ENCODE measurements at regions of chr15 and their contacts with region 1.

Region 1: DNA sequence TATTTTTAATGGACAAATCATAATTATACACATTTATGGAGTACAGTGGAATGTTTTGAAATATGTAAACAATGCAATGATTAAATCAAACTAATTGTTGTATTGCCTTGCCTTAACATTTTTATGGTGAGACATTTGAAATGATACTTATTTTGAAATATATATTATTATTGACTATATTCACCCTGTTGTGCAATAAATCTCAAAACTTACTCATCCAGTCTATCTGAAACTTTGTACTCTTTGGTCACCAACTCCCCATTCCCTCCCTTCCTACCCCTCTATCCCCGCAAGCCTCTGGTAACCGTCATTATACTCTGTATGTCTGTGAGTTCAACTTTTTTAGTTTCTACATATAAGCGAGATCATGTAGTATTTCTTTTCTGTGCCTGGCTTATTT is 74.7 kb upstream of the GOLGA6B start:
- DNase-seq: no peak
- H3K4me3 ChIP-seq: no peak overlapping the region
- H3K27ac ChIP-seq: no peak overlapping the region
- H3K4me1 ChIP-seq: no peaks in the 10 kb centered on the region
- H3K27me3 ChIP-seq: no peaks in the 10 kb centered on the region
- CTCF ChIP-seq: no peak

Region 2: GRCh38 chr15:71701808-71702207 is 878.0 kb before region 1 on chr15:
- intact Hi-C with region 1: loop called (anchors 5 kb)
- DNase-seq: no peak
- H3K4me3 ChIP-seq: no peak overlapping the region
- H3K27ac ChIP-seq: no peak overlapping the region
- H3K4me1 ChIP-seq: peaks cover 0 to 6% (median under 1%) of the 10 kb centered on the region in 4 donors
- H3K27me3 ChIP-seq: no peaks in the 10 kb centered on the region
- CTCF ChIP-seq: no peak